ENCODE measurements at regions of chr2 and their contacts with region 1.

Region 1: GRCh38 chr2:168346725-168347477 is 99.5 kb upstream of the STK39 start:
- DNase-seq: peak; percentile 69
- H3K4me3 ChIP-seq: peak overlapping the region; percentile 57 to 63
- H3K27ac ChIP-seq: peak overlapping the region in 1 of 2 experiments; percentile 82; a peak in 2 of 4 replicates
- H3K4me1 ChIP-seq: peaks cover 0 to 6% of the 10 kb centered on the region in 2 experiments; a peak in 2 of 4 replicates
- H3K27me3 ChIP-seq: no peaks in the 10 kb centered on the region
- CTCF ChIP-seq: peak; percentile 84
- EP300 ChIP-seq: no peak
- RAD21 ChIP-seq: peak; percentile 97

Region 2: GRCh38 chr2:168336864-168337263 is 10.0 kb before region 1 on chr2:
- CTCF ChIA-PET with region 1: interaction called, 10 read pairs
- POLR2A ChIA-PET with region 1: no interaction called
- DNase-seq: no peak
- H3K4me3 ChIP-seq: no peak overlapping the region
- H3K27ac ChIP-seq: no peak overlapping the region
- H3K4me1 ChIP-seq: peaks cover 0 to 6% of the 10 kb centered on the region in 2 experiments; a peak in 1 of 4 replicates
- H3K27me3 ChIP-seq: no peaks in the 10 kb centered on the region
- CTCF ChIP-seq: 0 out of 2 replicates have a peak, but pooled peaks have one; percentile 19
- EP300 ChIP-seq: no peak
- RAD21 ChIP-seq: peak; percentile 41

Region 3: DNA sequence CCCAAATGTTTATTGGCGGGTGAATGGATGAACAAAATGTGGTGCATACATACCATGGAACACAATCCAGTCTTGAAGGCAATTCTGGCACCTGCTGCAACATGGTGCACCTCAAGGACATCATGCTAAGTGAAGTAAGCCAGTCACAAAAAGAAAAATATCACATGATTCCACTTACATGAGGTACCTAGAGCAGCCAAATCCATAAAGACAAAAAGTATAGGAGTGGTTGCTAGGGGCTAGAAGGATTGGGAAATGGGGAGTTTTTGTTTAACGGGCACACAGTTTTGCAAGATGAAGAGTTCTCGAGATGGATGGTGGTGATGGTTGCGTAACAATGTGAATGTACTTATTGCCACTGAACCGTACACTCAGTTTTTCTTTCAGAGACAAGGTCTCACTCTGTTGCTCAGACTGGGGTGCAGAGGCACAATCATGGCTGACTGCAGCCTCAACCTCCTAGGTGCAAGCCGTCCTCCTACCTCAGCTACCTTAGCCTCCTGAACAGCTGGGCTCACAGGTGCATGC is 18.3 kb after region 1 on chr2:
- CTCF ChIA-PET with region 1: interaction called, 11 read pairs
- POLR2A ChIA-PET with region 1: no interaction called
- DNase-seq: no peak
- H3K4me3 ChIP-seq: no peak overlapping the region
- H3K27ac ChIP-seq: no peak overlapping the region
- H3K4me1 ChIP-seq: no peaks in the 10 kb centered on the region; a peak in 1 of 4 replicates
- H3K27me3 ChIP-seq: no peaks in the 10 kb centered on the region
- CTCF ChIP-seq: no peak
- EP300 ChIP-seq: no peak
- RAD21 ChIP-seq: no peak

Region 4: DNA sequence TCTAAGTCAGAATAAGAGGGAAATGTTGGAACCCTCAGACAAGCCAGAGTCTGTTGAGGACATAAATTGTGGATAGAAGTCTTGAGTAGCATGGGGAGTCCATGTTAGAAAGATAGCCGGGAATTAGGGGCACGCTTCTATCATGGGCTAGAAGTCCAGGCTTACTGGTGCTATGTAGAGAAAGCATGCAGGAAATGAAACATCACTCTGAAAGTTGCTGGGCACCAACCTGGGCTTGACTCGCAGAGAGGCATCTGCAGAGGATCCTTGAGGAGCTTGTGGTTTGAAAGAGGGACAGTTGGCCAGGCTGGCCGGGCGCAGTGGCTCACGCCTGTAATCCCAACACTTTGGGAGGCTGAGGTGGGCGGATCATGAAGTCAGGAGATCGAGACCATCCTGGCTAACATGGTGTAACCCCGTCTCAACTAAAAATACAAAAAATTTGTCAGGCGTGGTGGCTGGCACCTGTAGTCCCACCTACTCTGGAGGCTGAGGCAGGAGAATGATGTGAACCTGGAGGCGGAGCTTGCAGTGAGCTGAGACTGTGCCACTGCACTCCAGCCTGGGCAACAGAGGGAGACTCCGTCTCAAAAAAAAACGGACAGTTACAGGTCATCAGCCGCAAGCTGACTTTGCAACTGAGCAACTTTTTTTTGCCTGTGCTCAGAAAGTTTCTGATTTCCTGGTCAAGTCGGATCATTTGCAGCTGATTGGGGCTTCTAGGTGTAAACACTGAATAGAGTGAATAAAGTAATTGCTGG is 134.1 kb after region 1 on chr2:
- CTCF ChIA-PET with region 1: interaction called, 10 read pairs
- POLR2A ChIA-PET with region 1: no interaction called
- DNase-seq: no peak
- H3K4me3 ChIP-seq: no peak overlapping the region
- H3K27ac ChIP-seq: no peak overlapping the region
- H3K4me1 ChIP-seq: peaks cover 0 to 6% of the 10 kb centered on the region in 2 experiments; a peak in 2 of 4 replicates
- H3K27me3 ChIP-seq: no peaks in the 10 kb centered on the region
- CTCF ChIP-seq: no peak
- EP300 ChIP-seq: no peak
- RAD21 ChIP-seq: no peak

Region 5: DNA sequence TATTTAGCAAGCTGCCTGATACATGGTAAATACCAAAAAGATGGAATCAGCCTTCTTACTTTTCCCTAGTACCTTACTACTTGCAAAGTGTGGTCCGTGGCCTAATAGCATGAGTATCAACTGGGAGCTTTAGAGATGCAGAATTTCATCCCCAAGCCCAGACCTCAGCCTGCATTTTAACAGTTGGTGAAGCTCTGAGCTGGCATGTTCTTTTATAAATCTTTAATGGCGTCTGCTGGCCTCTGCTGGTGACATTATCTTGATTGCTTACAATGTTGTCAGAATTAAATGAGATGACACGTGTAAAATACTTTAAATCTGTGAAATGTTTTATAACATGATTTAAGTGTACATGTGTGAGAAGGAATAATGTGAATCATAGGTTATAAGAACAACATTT is 340.4 kb after region 1 on chr2:
- CTCF ChIA-PET with region 1: interaction called, 23 read pairs
- POLR2A ChIA-PET with region 1: no interaction called
- DNase-seq: no peak
- H3K4me3 ChIP-seq: no peak overlapping the region
- H3K27ac ChIP-seq: no peak overlapping the region
- H3K4me1 ChIP-seq: peaks cover 0 to 21% of the 10 kb centered on the region in 2 experiments; a peak in 2 of 4 replicates
- H3K27me3 ChIP-seq: no peaks in the 10 kb centered on the region
- CTCF ChIP-seq: peak; percentile 43
- EP300 ChIP-seq: no peak
- RAD21 ChIP-seq: peak; percentile 67

Region 6: DNA sequence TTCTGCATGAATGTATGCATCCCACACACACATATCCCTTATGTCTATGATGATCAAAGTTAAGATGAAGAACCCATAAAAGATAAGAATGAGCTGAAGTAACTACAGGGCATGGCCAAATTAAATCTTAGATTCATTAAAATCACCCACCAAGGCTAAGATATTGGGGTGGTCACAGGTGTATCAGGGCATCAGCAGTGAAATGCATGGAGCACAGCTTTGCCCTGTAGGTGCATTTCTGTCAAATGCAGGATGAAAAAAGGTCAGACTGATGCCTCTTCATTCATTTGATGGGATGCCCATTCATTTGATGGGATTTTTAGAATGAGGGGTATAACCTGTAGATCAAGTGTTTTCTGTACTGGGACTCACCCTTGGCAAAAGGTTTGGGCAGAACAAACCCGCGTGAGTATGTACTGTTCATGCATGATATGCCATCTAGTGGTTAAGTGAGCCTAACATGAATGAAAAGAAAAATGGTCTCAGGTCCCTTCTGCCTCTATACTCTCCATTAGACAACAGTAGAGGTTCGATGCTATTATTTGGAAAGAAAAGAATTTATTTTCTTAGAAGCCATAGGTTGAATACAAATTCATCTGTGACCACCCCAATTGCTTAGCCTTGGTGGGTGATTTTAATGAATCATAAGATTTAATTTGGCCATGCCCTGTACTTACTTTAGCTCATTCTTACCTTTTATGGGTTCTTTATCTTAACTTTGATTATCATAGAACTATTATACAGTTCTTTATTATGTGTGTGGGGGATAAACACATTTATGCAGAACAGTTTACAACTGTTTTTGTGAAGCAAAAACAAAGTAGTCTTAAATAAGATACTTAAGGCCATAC is 412.3 kb after region 1 on chr2:
- CTCF ChIA-PET with region 1: interaction called, 50 read pairs
- POLR2A ChIA-PET with region 1: no interaction called
- DNase-seq: peak; percentile 66
- H3K4me3 ChIP-seq: no peak overlapping the region
- H3K27ac ChIP-seq: no peak overlapping the region
- H3K4me1 ChIP-seq: peaks cover 0 to 12% of the 10 kb centered on the region in 2 experiments; a peak in 2 of 4 replicates
- H3K27me3 ChIP-seq: no peaks in the 10 kb centered on the region
- CTCF ChIP-seq: peak; percentile 70
- EP300 ChIP-seq: no peak
- RAD21 ChIP-seq: peak; percentile 86

Region 7: DNA sequence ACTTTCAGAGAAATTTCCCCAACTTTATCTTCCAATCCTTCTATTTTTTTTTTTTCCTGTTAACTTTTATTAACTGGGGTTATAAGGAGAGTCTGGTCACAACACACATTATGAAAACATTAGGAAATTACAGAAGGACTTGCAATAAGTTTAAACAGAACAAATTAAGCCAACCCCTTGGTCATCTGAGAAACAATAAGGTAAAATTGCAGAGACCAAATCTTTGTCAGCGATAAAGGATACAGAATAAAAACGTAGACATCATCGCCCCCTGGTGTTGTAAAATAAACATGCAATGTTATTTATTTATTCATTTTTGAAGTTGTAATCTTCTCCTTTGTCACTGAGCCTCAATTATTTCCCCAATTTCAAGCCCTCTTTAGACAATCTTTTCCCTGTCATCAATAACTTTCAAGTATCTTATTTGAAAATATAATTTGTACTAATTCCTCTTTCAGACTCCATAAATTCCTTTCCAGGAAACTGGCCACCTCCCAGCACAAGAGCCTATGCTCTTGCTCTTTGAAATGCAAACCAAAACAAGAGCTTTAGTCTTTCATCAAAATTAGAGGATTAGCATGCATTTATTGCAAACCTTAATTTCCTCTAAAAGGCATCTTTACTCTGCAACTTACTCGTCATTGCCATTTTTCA is 573.7 kb after region 1 on chr2:
- CTCF ChIA-PET with region 1: interaction called, 26 read pairs
- POLR2A ChIA-PET with region 1: no interaction called
- DNase-seq: peak; percentile 25
- H3K4me3 ChIP-seq: no peak overlapping the region
- H3K27ac ChIP-seq: no peak overlapping the region
- H3K4me1 ChIP-seq: no peaks in the 10 kb centered on the region
- H3K27me3 ChIP-seq: peaks cover 2% of the 10 kb centered on the region
- CTCF ChIP-seq: peak; percentile 75
- EP300 ChIP-seq: no peak
- RAD21 ChIP-seq: peak; percentile 76

Measured in SK-N-SH (cell line).